ENCODE measurements at regions of chr2 and their contacts with region 1.

Region 1: DNA sequence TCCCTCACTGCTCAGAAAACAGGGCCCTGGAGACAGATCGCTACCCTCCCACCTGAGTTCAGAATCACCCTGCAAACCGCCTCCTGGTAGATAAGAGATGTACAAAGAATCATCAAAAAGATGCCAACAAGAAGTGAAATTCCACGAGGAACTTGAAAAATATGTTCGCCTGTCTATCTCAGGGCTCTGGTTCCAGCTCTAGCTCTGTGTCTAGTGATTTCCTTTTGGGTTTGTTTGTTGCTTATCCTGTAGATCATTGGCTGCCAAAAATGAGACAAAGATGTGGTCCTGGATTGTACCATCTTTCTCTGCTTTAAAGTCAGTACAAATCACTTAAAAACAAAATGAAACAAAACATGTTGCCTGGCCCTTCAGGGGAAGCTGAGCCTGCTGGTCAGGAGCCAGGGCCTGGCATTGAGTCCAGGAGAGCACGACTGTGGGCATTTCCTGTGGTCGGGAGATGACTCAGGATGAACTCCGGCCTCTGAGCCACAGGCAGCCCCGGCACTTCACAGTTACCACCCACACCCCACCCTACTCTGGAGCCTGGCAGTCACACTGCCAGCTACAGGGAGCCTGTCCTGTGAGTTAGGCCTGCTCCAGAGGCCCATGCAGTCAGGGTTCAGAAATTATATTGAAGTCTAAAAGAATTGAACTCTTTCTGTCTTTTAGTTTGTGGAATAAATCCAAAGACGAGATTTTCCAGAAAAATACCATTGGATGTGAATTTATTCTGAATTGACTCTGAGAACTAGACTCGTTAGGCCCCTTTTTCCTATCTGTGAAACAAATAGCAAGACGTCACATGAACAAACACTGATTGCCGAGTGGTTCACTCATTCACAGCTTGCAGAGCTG is 8.0 kb upstream of the ITGB6 start:
- DNase-seq: peak; percentile 89 to 92
- H3K4me3 ChIP-seq: peak overlapping the region; percentile 43; the same call in 1 of the 2 replicates
- H3K27ac ChIP-seq: peak overlapping the region; percentile 98
- H3K4me1 ChIP-seq: peaks cover 63% of the 10 kb centered on the region
- H3K27me3 ChIP-seq: no peaks in the 10 kb centered on the region
- CTCF ChIP-seq: no peak

Region 2: DNA sequence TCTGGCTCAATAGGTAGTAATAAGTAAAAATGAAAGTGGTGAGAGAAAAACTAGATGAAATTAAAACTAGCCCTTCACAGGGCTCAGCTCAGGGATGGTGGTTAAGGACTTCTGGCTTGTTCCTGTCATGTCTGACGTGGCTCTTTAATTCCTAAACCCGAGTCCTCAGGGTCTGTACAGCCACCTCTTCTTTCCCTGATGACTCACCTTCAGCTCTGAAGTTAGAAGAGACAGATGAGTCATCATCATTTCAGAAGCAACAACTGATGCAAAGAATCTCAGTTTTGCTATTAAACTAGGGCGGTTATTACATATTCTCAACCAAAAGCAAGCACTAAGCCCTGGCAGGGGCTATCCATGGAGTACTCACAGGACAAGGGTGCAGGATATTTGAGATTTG is 16.0 kb after region 1 on chr2:
- CTCF ChIA-PET with region 1: interaction called, 3 read pairs
- POLR2A ChIA-PET with region 1: interaction called, 9 read pairs
- intact Hi-C with region 1: loop called (anchors 1 kb)
- DNase-seq: peak in 1 of 2 experiments; percentile 93
- H3K4me3 ChIP-seq: no peak overlapping the region
- H3K27ac ChIP-seq: peak overlapping the region; percentile 100
- H3K4me1 ChIP-seq: peaks cover 98% of the 10 kb centered on the region
- H3K27me3 ChIP-seq: no peaks in the 10 kb centered on the region
- CTCF ChIP-seq: no peak

Region 3: DNA sequence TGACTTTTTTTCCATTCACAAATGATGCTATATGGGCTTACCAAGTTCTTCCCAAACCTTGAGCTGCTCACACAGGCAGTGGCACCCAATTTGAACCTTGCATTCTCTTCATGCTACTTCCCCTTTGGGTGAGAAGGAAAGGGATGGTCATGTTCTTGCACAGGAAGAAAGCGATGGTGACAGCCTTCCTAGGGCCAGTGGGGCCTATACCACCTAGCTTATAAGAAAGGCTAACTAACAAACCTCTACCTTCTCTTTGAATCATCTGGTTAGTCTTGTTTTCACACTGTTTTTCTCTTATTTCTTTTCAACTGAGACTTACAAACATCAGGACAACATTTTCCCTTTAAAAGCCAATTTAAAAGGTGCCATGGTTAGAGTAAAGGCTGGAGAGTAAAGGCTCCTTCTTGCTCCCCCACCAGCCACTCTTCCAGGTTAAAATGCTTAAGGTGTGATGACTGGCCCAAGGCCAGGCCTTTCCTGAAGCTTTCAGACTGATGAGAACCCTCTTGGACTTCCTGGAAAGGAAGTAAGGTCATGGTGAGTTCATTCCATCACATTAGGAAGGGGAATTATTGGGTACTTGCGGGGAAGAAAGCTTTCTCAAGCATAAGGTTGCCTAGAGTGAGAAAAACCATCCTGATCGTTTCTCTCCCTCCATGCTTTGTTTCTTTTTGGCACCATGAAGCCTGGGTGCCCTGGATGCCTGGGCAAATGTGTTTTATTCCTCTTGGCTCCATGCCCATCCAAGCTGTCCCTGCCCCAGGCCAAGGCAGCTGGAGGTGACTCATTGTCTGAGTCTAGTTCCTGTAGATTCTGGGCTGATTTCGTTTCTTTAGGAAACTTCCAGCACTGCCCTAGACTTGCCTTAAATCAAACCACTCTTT is 33.5 kb after region 1 on chr2:
- CTCF ChIA-PET with region 1: no interaction called
- POLR2A ChIA-PET with region 1: no interaction called
- intact Hi-C with region 1: loop called (anchors 5 kb)
- DNase-seq: peak; percentile 71 to 80
- H3K4me3 ChIP-seq: no peak overlapping the region
- H3K27ac ChIP-seq: peak overlapping the region; percentile 84
- H3K4me1 ChIP-seq: peaks cover 29% of the 10 kb centered on the region
- H3K27me3 ChIP-seq: no peaks in the 10 kb centered on the region
- CTCF ChIP-seq: no peak

Region 4: DNA sequence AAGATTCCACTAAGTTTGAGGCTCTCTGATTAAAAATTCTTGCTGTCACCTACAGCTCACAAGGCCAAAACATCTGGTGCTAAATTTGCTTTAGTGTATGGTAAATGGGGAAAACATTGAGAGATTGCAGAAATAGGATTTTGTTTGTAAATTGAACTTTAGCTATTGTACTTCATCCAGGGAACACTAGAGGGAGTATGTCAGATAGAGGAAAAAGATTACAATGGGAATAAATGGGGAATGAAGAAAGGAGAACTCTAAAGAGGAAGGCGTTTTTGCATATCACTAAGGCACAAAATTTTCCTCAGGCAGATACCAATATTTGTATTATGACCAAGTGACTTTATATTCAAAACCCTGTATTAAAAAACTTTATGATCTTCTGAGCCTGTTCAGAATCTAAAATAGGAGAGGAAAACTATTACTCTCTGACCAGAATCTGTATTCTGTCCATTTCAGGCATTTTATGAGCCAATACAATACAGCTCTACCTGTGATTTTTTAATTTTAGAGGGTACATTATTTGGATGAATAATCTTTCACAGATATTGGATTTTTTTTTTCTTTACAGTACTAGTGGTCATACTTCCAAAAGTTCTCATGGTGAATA is 44.4 kb after region 1 on chr2:
- CTCF ChIA-PET with region 1: no interaction called
- POLR2A ChIA-PET with region 1: no interaction called
- intact Hi-C with region 1: loop called (anchors 1 kb)
- DNase-seq: no peak
- H3K4me3 ChIP-seq: no peak overlapping the region
- H3K27ac ChIP-seq: no peak overlapping the region
- H3K4me1 ChIP-seq: peaks cover 20% of the 10 kb centered on the region
- H3K27me3 ChIP-seq: no peaks in the 10 kb centered on the region
- CTCF ChIP-seq: peak; percentile 81

Region 5: DNA sequence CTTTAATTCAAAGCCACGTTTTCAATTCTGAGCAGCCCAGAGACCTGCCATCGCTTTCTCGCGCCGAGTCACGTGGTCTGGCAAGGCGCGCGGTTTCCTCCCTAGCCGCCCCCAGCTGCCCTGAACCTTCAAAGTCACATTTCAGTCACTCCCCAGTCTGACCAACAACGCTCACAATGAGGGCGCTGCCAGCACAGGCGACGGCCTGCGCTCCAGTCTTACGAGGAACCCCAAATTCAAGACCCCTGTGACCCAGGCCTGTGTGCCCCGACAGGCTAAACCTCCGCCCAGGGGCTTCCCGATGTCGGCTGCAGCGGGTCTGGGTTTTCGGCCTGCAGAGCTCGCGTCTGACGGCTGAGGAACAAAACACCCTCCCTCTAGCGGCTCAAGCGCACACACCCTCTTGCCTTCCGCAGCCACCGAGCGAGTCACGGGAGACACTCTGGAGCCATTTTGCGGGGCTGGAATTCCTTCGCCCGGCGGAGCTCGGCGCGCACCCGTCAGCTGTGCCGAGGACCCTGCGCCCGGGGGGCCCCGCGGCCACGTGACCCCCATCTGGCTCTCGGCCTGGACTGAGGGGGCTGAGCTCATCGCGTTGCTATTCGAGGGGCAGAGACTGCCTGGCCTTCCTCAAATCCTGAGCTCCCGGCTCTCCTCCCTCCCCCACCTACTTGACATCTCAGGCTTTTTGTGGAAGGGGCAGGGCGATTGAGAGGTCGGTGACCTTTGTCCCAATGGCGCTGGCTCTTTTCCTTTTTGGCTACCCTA is 62.0 kb after region 1 on chr2:
- CTCF ChIA-PET with region 1: interaction called, 3 read pairs
- POLR2A ChIA-PET with region 1: no interaction called
- intact Hi-C with region 1: loop called (anchors 1 kb)
- DNase-seq: peak; percentile 78
- H3K4me3 ChIP-seq: peak overlapping the region; percentile 52; the same call in 1 of the 2 replicates
- H3K27ac ChIP-seq: peak overlapping the region; percentile 86
- H3K4me1 ChIP-seq: peaks cover 26% of the 10 kb centered on the region
- H3K27me3 ChIP-seq: no peaks in the 10 kb centered on the region
- CTCF ChIP-seq: peak; percentile 59

Region 6: DNA sequence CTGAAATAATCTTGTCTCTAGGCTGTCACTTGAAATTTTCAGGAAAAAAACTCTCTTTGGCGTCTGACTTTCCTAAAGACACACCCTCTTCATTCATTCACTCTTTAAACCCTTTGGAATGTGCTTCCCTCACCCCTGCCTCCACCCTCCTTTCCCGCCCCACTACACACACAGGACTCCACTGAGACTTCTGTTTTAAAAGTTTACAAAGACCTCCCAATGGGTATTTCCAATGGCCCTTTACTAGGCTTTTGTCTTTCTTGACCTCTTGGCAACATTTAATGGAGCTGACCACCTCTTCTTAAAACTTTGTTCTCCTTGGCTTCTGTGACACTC is 189.5 kb after region 1 on chr2:
- CTCF ChIA-PET with region 1: no interaction called
- POLR2A ChIA-PET with region 1: no interaction called
- intact Hi-C with region 1: loop called (anchors 5 kb)
- DNase-seq: no peak
- H3K4me3 ChIP-seq: no peak overlapping the region
- H3K27ac ChIP-seq: peak overlapping the region; percentile 53
- H3K4me1 ChIP-seq: peaks cover 30% of the 10 kb centered on the region
- H3K27me3 ChIP-seq: no peaks in the 10 kb centered on the region
- CTCF ChIP-seq: no peak

Region 7: GRCh38 chr2:160509016-160509415 is 301.0 kb after region 1 on chr2:
- CTCF ChIA-PET with region 1: no interaction called
- POLR2A ChIA-PET with region 1: interaction called, 11 read pairs
- intact Hi-C with region 1: no loop called
- DNase-seq: no peak
- H3K4me3 ChIP-seq: no peak overlapping the region
- H3K27ac ChIP-seq: no peak overlapping the region
- H3K4me1 ChIP-seq: no peaks in the 10 kb centered on the region
- H3K27me3 ChIP-seq: no peaks in the 10 kb centered on the region
- CTCF ChIP-seq: no peak

Region 8: GRCh38 chr2:160893581-160893980 is 685.5 kb after region 1 on chr2:
- CTCF ChIA-PET with region 1: no interaction called
- POLR2A ChIA-PET with region 1: no interaction called
- intact Hi-C with region 1: no loop called
- DNase-seq: no peak
- H3K4me3 ChIP-seq: no peak overlapping the region
- H3K27ac ChIP-seq: no peak overlapping the region
- H3K4me1 ChIP-seq: no peaks in the 10 kb centered on the region
- H3K27me3 ChIP-seq: no peaks in the 10 kb centered on the region
- CTCF ChIP-seq: no peak

Measured in PC-9 (cell line).